OCI-LY7 (cell line): ENCODE measurements at regions of chr2 and their contacts with region 1.

Region 1: GRCh38 chr2:17166506-17166905 is 351.7 kb downstream of the RAD51AP2 start:
- DNase-seq: no peak
- H3K4me3 ChIP-seq: no peak overlapping the region
- H3K27ac ChIP-seq: no peak overlapping the region
- H3K4me1 ChIP-seq: no peaks in the 10 kb centered on the region
- CTCF ChIP-seq: no peak

Region 2: GRCh38 chr2:17177088-17177487 is 10.6 kb after region 1 on chr2:
- CTCF ChIA-PET with region 1: interaction called, 3 read pairs
- POLR2A ChIA-PET with region 1: interaction called, 13 read pairs
- intact Hi-C with region 1: no loop called
- DNase-seq: no peak
- H3K4me3 ChIP-seq: no peak overlapping the region
- H3K27ac ChIP-seq: no peak overlapping the region
- H3K4me1 ChIP-seq: no peaks in the 10 kb centered on the region
- CTCF ChIP-seq: no peak

Region 3: GRCh38 chr2:17518212-17519154 is 352.0 kb after region 1 on chr2 and contains the start of gene RAD51AP2:
- CTCF ChIA-PET with region 1: no interaction called
- POLR2A ChIA-PET with region 1: no interaction called
- intact Hi-C with region 1: loop called (anchors 10 kb)
- DNase-seq: peak; percentile 80
- H3K4me3 ChIP-seq: peak within 1 kb of the TSS; percentile 66
- H3K27ac ChIP-seq: no peak within 1 kb of the TSS
- H3K4me1 ChIP-seq: peaks cover 33% of the 10 kb centered on the region
- CTCF ChIP-seq: no peak
- total RNA-seq, gene RAD51AP2: 0.05 and 0.35 TPM in 2 replicates